ENCODE measurements at regions of chr19 and their contacts with region 1.

Region 1: GRCh38 chr19:38701455-38702063 is 42.7 kb downstream of the CAPN12 start:
- DNase-seq: peak in 4 of 7 donors; percentile 66 to 82 (median 76)
- H3K4me3 ChIP-seq: no peak overlapping the region
- H3K27ac ChIP-seq: peak overlapping the region; percentile 39 to 93 (median 76)
- H3K4me1 ChIP-seq: peaks cover 22 to 78% of the 10 kb centered on the region in 2 donors
- H3K27me3 ChIP-seq: no peaks in the 10 kb centered on the region
- CTCF ChIP-seq: no peak
- POLR2A ChIP-seq: no peak

Region 2: DNA sequence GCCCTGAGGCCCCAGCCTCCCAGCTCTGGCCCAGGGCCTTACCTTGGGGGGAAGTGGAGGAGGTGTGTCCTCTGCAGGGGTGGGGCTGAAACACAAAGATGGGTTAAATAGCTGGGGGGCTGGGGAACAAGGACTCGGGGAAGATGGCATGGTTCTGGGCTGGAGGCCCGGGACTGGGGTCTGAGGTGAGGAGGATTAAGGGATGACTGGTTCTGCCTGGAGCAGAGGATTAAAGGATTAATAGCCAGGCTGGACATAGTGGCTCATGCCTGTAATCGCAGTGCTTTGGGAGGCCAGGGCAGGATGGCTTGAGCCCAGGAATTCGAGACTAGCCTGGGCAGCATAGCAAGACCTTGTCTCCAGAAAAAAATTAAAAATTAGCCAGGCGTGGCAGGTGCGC is 95.4 kb before region 1 on chr19:
- intact Hi-C with region 1: no loop called
- DNase-seq: no peak
- H3K4me3 ChIP-seq: no peak overlapping the region
- H3K27ac ChIP-seq: no peak overlapping the region
- H3K4me1 ChIP-seq: no peaks in the 10 kb centered on the region
- H3K27me3 ChIP-seq: no peaks in the 10 kb centered on the region
- CTCF ChIP-seq: no peak
- POLR2A ChIP-seq: no peak

Region 3: GRCh38 chr19:38650911-38651584 is 50.5 kb before region 1 on chr19:
- intact Hi-C with region 1: loop called (anchors 5 to 10 kb)
- DNase-seq: peak in 5 of 7 donors; percentile 53 to 73 (median 67)
- H3K4me3 ChIP-seq: peak overlapping the region in 2 of 4 donors; percentile 7 to 83
- H3K27ac ChIP-seq: peak overlapping the region; percentile 34 to 99 (median 95)
- H3K4me1 ChIP-seq: peaks cover 61 to 64% of the 10 kb centered on the region in 2 donors
- H3K27me3 ChIP-seq: no peaks in the 10 kb centered on the region
- CTCF ChIP-seq: peak in 2 of 6 experiments; percentile 38 to 42
- POLR2A ChIP-seq: peak in 1 of 2 donors; percentile 40

Measured in adrenal gland (tissue), 19 donors.